ENCODE measurements at regions of chr5 and their contacts with region 1.

Region 1: GRCh38 chr5:76319673-76320072 is 83.4 kb upstream of the IQGAP2 start:
- DNase-seq: no peak
- ATAC-seq: no peak
- H3K4me3 Mint-ChIP-seq: no peak overlapping the region
- H3K27ac Mint-ChIP-seq: no peak overlapping the region
- H3K4me1 Mint-ChIP-seq: peaks cover 18% of the 10 kb centered on the region
- H3K27me3 Mint-ChIP-seq: no peaks in the 10 kb centered on the region

Region 2: DNA sequence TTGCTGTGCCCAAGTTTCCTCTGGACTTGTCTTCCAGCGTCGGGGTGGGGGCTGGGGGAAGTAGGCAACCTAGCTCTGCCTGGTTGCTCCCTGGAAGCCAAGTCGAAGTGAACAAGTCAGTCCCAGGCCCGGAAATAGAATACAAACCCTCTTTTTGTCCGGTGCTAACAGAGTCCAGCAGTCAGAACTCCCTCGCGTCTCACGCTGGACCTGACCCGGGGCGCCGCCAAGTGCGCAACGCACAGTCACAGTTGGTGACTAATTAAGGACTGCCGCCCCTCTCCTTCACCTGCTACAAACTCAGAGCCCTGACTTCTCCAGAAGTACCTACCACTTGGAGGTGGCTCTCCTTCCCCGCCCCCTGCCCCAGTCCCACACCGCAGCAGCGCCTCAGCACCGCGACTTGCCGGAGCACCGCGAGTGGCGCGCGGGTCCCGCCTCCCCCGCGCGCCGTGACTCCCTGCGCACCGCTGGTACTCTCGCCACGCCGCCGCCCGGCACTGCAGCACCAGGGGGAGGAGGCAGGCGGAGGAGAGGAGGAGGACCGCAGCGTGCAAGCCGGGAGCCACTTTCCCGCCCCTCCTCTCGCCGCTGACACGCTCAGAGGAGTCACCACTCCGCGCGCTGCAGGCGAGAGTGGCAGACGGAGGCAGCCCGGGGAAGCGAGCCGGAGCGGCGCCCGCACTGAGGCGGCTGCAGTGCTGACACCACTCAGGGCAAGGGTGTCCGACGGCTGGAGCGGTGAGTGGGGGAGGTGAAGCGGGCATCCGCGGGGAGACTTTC is 236.7 kb before region 1 on chr5 and contains the start of gene SV2C:
- CTCF ChIA-PET with region 1: no interaction called
- DNase-seq: peak; percentile 65
- ATAC-seq: peak; percentile 70
- H3K4me3 Mint-ChIP-seq: peak within 1 kb of the TSS; percentile 67
- H3K27ac Mint-ChIP-seq: peak within 1 kb of the TSS; percentile 42
- H3K4me1 Mint-ChIP-seq: peaks cover 26% of the 10 kb centered on the region
- H3K27me3 Mint-ChIP-seq: peaks cover 87% of the 10 kb centered on the region
- total RNA-seq, gene SV2C: 0.20 to 0.26 TPM

Region 3: DNA sequence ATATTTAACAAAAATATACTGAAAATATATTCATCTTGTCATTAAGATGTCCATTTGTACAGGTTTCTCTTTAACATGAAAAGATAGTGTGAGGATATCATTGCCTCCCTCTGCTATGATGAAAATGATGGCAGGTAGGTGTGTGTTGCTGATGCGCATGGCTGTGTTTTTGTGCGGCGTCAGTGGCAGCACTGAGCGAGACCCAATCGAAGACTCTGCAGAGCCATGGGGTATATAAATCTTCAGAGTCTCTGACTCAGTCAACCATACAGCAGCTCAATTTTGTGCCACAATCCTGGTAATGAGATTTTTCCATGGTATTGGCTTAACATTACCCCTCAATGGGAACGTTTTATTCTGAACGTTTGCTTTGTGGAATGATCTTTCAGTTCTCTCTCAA is 70.1 kb before region 1 on chr5:
- CTCF ChIA-PET with region 1: no interaction called
- DNase-seq: no peak
- ATAC-seq: no peak
- H3K4me3 Mint-ChIP-seq: no peak overlapping the region
- H3K27ac Mint-ChIP-seq: no peak overlapping the region
- H3K4me1 Mint-ChIP-seq: no peaks in the 10 kb centered on the region
- H3K27me3 Mint-ChIP-seq: peaks cover 16% of the 10 kb centered on the region

Region 4: GRCh38 chr5:76305269-76305668 is 14.4 kb before region 1 on chr5:
- CTCF ChIA-PET with region 1: interaction called, 35 read pairs
- DNase-seq: no peak
- ATAC-seq: no peak
- H3K4me3 Mint-ChIP-seq: no peak overlapping the region
- H3K27ac Mint-ChIP-seq: no peak overlapping the region
- H3K4me1 Mint-ChIP-seq: peaks cover 32% of the 10 kb centered on the region
- H3K27me3 Mint-ChIP-seq: peaks cover 5% of the 10 kb centered on the region

Region 5: DNA sequence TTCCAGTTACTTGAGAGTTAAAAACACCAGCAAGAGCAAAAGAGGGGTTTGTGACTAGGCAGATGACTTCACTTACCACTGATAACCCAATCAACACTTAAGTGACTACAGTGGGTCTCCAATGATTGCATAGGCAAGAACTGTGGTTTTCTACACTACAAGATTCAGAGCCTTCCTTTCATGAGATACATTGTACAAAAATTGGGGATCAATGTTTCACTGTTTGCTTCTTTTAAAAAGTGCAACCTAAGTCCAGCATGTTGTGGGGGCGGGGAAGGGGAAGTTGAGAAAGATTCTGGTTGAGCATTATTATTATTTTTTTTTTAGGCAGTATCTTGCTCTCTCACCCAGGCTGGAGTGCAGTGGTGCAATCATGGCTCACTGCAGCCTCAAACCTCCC is 87.0 kb after region 1 on chr5:
- CTCF ChIA-PET with region 1: no interaction called
- DNase-seq: no peak
- ATAC-seq: no peak
- H3K4me3 Mint-ChIP-seq: peak overlapping the region; percentile 12
- H3K27ac Mint-ChIP-seq: peak overlapping the region; percentile 68
- H3K4me1 Mint-ChIP-seq: peaks cover 58% of the 10 kb centered on the region
- H3K27me3 Mint-ChIP-seq: no peaks in the 10 kb centered on the region

Measured in activated CD8-positive, alpha-beta memory T cell treated with anti-CD3 and anti-CD28 coated beads, Interleukin-2, amount 10 ng/mL, durations not matched to agents 7 days and 5 days (primary cell).